ENCODE measurements at regions of chr22 and their contacts with region 1.

Region 1: GRCh38 chr22:17171313-17172171 is 12.5 kb upstream of the HDHD5 start:
- DNase-seq: no peak
- ATAC-seq: peak; percentile 97
- H3K4me3 ChIP-seq: peak overlapping the region; percentile 86
- H3K27ac ChIP-seq: peak overlapping the region; percentile 81
- H3K4me1 ChIP-seq: peaks cover 6% of the 10 kb centered on the region
- H3K27me3 ChIP-seq: no peaks in the 10 kb centered on the region
- CTCF ChIP-seq: peak; percentile 82 to 96 (median 85)
- EP300 ChIP-seq: no peak
- POLR2A ChIP-seq: peak; percentile 63; the same call in 1 of the 2 replicates
- RAD21 ChIP-seq: peak; percentile 65

Region 2: GRCh38 chr22:16917144-16918003 is 254.2 kb before region 1 on chr22:
- CTCF ChIA-PET with region 1: interaction called, 10 read pairs
- POLR2A ChIA-PET with region 1: no interaction called
- RAD21 ChIA-PET with region 1: no interaction called
- SMC1A ChIA-PET with region 1: no interaction called
- in situ Hi-C with region 1: no loop called
- intact Hi-C with region 1: no loop called
- DNase-seq: peak; percentile 12
- ATAC-seq: peak; percentile 92
- H3K4me3 ChIP-seq: no peak overlapping the region
- H3K27ac ChIP-seq: no peak overlapping the region
- H3K4me1 ChIP-seq: no peaks in the 10 kb centered on the region; the same call in 1 of the 2 replicates
- H3K27me3 ChIP-seq: no peaks in the 10 kb centered on the region
- CTCF ChIP-seq: peak; percentile 69 to 77 (median 75)
- EP300 ChIP-seq: no peak
- POLR2A ChIP-seq: no peak
- RAD21 ChIP-seq: peak; percentile 69

Region 3: GRCh38 chr22:17158568-17159503 is 12.7 kb before region 1 on chr22 and contains the start of gene HDHD5:
- CTCF ChIA-PET with region 1: interaction called, 72 read pairs
- POLR2A ChIA-PET with region 1: no interaction called
- RAD21 ChIA-PET with region 1: interaction called, 6 read pairs
- SMC1A ChIA-PET with region 1: interaction called, 3 read pairs
- in situ Hi-C with region 1: no loop called
- intact Hi-C with region 1: no loop called
- DNase-seq: no peak
- ATAC-seq: peak; percentile 90
- H3K4me3 ChIP-seq: peak within 1 kb of the TSS; percentile 79
- H3K27ac ChIP-seq: peak within 1 kb of the TSS; percentile 61
- H3K4me1 ChIP-seq: peaks cover 3% of the 10 kb centered on the region; the same call in 1 of the 2 replicates
- H3K27me3 ChIP-seq: no peaks in the 10 kb centered on the region
- CTCF ChIP-seq: no peak
- EP300 ChIP-seq: no peak
- POLR2A ChIP-seq: peak; percentile 47
- RAD21 ChIP-seq: no peak
- polyA plus RNA-seq, gene HDHD5: 1.7 to 7.7 TPM

Region 4: GRCh38 chr22:17213976-17214375 is 42.4 kb after region 1 on chr22:
- CTCF ChIA-PET with region 1: interaction called, 10 read pairs
- POLR2A ChIA-PET with region 1: no interaction called
- RAD21 ChIA-PET with region 1: interaction called, 6 read pairs
- SMC1A ChIA-PET with region 1: interaction called, 5 read pairs
- in situ Hi-C with region 1: no loop called
- intact Hi-C with region 1: no loop called
- DNase-seq: no peak
- ATAC-seq: no peak
- H3K4me3 ChIP-seq: no peak overlapping the region
- H3K27ac ChIP-seq: no peak overlapping the region
- H3K4me1 ChIP-seq: peaks cover 19% of the 10 kb centered on the region
- H3K27me3 ChIP-seq: no peaks in the 10 kb centered on the region
- CTCF ChIP-seq: peak; percentile 35 to 59 (median 42)
- EP300 ChIP-seq: no peak
- POLR2A ChIP-seq: no peak
- RAD21 ChIP-seq: peak; percentile 43; the same call in 1 of the 2 replicates

Region 5: GRCh38 chr22:17266251-17266971 is 94.9 kb after region 1 on chr22:
- CTCF ChIA-PET with region 1: interaction called, 16 read pairs
- POLR2A ChIA-PET with region 1: no interaction called
- RAD21 ChIA-PET with region 1: interaction called, 7 read pairs
- SMC1A ChIA-PET with region 1: interaction called, 3 read pairs
- in situ Hi-C with region 1: no loop called
- intact Hi-C with region 1: no loop called
- DNase-seq: no peak
- ATAC-seq: peak; percentile 67
- H3K4me3 ChIP-seq: no peak overlapping the region
- H3K27ac ChIP-seq: no peak overlapping the region
- H3K4me1 ChIP-seq: peaks cover 3% of the 10 kb centered on the region; the same call in 1 of the 2 replicates
- H3K27me3 ChIP-seq: no peaks in the 10 kb centered on the region
- CTCF ChIP-seq: no peak
- EP300 ChIP-seq: no peak
- POLR2A ChIP-seq: no peak
- RAD21 ChIP-seq: no peak

Region 6: GRCh38 chr22:17501679-17502285 is 330.2 kb after region 1 on chr22:
- CTCF ChIA-PET with region 1: interaction called, 157 read pairs
- POLR2A ChIA-PET with region 1: interaction called, 4 read pairs
- RAD21 ChIA-PET with region 1: interaction called, 88 read pairs
- SMC1A ChIA-PET with region 1: interaction called, 64 read pairs
- in situ Hi-C with region 1: loop called (anchors 5 kb)
- intact Hi-C with region 1: loop called (anchors 1 kb)
- DNase-seq: peak; percentile 57
- ATAC-seq: peak; percentile 97
- H3K4me3 ChIP-seq: no peak overlapping the region
- H3K27ac ChIP-seq: no peak overlapping the region
- H3K4me1 ChIP-seq: no peaks in the 10 kb centered on the region
- H3K27me3 ChIP-seq: no peaks in the 10 kb centered on the region
- CTCF ChIP-seq: peak; percentile 61 to 88 (median 61); a peak in 5 of 6 replicates
- EP300 ChIP-seq: no peak
- POLR2A ChIP-seq: no peak
- RAD21 ChIP-seq: peak; percentile 94

Measured in GM12878 (cell line).